Panc1 (cell line): ENCODE measurements at regions of chr14 and their contacts with region 1.

Region 1: DNA sequence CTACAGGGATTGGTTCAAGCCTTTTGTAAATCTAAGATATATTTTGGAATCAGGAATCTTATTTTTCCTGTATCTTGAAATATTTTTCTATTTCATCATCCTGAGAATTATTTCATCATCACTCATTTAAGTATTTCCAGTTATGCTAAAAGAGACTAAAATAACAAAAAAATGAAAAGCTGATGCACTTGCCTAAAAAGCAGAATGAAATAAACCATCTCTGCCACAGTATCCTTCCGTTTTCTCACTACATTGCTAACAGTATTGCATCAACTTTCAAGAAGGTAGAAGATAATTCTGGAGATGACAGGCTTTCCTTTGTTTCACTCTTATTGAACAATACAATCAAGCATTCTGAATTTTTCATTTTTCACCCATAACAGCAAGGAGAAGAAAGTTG is 31.1 kb upstream of the EIF5 start:
- DNase-seq: no peak
- ATAC-seq: no peak
- H3K4me3 ChIP-seq: no peak overlapping the region
- H3K27ac ChIP-seq: no peak overlapping the region
- H3K4me1 ChIP-seq: no peaks in the 10 kb centered on the region
- H3K27me3 ChIP-seq: no peaks in the 10 kb centered on the region
- CTCF ChIP-seq: no peak

Region 2: GRCh38 chr14:103386713-103387329 is 83.9 kb after region 1 on chr14:
- CTCF ChIA-PET with region 1: interaction called, 10 read pairs
- POLR2A ChIA-PET with region 1: no interaction called
- in situ Hi-C with region 1: no loop called
- intact Hi-C with region 1: no loop called
- DNase-seq: no peak
- ATAC-seq: no peak
- H3K4me3 ChIP-seq: peak overlapping the region; percentile 78 to 89
- H3K27ac ChIP-seq: peak overlapping the region; percentile 75
- H3K4me1 ChIP-seq: peaks cover 13% of the 10 kb centered on the region
- H3K27me3 ChIP-seq: no peaks in the 10 kb centered on the region
- CTCF ChIP-seq: no peak